Left lung (tissue), 14 donors: ENCODE measurements at regions of chr6 and their contacts with region 1.

Region 1: DNA sequence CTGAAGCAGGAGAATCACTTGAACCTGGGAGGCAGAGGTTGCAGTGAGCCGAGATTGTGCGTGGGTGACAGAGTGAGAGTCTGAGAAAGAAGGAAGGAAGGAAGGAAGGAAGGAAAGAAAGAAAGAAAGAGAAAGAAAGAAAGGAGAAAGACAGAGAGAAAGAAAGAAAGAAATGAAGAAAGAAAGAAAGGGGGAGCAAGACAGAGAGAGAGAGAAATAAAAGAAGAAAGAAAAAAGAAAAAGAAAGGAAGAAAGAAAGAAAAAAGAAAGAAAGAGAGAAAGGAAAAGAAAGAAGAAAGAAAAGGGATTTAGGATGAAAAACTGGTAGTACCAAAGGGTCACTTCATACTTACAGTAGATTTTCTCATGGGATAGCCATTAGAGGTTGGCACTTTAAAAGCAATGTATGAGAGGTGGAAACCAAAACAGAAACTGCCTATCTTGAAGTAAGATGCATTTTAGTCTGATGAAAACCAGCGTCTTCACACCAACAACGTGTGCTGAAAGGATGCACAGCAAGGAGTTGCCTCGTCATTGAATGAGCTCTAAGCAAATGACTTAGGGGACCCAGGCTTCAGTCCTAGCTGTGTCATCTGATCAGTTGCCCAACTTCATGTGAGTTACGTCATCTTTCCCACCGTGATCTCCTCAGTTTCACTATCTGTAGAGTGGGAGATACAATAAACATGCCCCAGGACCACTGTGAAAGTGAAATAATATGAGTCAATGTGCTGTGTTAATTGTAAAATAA is 133.9 kb upstream of the NEDD9 start:
- DNase-seq: no peak
- ATAC-seq: no peak
- H3K4me3 ChIP-seq: peak overlapping the region in 1 of 2 donors; percentile 11
- H3K27ac ChIP-seq: peak overlapping the region; percentile 82 to 83
- H3K4me1 ChIP-seq: peaks cover 14 to 78% of the 10 kb centered on the region in 2 donors
- H3K27me3 ChIP-seq: no peaks in the 10 kb centered on the region
- CTCF ChIP-seq: no peak

Region 2: GRCh38 chr6:11434565-11435326 is 68.4 kb after region 1 on chr6:
- intact Hi-C with region 1: loop called in 1 of 2 experiments (anchors 10 kb)
- DNase-seq: peak in 2 of 4 donors; percentile 67 to 80
- ATAC-seq: peak; percentile 80
- H3K4me3 ChIP-seq: no peak overlapping the region
- H3K27ac ChIP-seq: peak overlapping the region; percentile 66 to 85
- H3K4me1 ChIP-seq: peaks cover 29 to 65% of the 10 kb centered on the region in 2 donors
- H3K27me3 ChIP-seq: no peaks in the 10 kb centered on the region
- CTCF ChIP-seq: no peak

Region 3: DNA sequence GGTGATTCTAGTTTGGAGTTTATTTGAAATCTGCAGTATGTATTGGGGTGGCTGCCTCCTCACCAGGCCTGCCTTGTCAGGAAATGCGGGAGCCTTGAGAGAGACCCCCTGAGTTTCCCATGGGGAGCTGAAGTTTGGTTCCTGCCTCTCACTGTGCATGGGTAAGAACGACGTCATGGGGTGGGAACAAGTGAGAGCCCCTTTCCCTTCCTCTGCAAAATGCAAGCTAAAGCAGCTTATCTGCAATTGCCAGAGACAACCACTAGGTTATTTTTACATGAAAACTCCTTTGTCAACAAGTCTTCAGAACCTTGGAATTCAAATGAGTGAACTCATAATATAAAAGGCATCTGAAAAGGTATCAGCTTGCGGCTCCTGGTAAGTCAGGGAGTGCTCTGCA is 229.5 kb after region 1 on chr6:
- intact Hi-C with region 1: no loop called
- DNase-seq: no peak
- ATAC-seq: no peak
- H3K4me3 ChIP-seq: no peak overlapping the region
- H3K27ac ChIP-seq: no peak overlapping the region
- H3K4me1 ChIP-seq: no peaks in the 10 kb centered on the region
- H3K27me3 ChIP-seq: no peaks in the 10 kb centered on the region
- CTCF ChIP-seq: no peak